ENCODE measurements at regions of chr17 and their contacts with region 1.

Region 1: GRCh38 chr17:44708401-44709181 is at the start of gene DBF4B:
- DNase-seq: peak; percentile 81
- H3K4me3 Mint-ChIP-seq: no peak within 1 kb of the TSS
- H3K27ac Mint-ChIP-seq: no peak within 1 kb of the TSS
- H3K4me1 Mint-ChIP-seq: peaks cover 5% of the 10 kb centered on the region
- H3K27me3 Mint-ChIP-seq: peaks cover 7% of the 10 kb centered on the region
- total RNA-seq, gene DBF4B: 22.5 and 22.8 TPM in 2 replicates

Region 2: GRCh38 chr17:44689477-44690217 is 18.9 kb before region 1 on chr17 and contains the start of gene CCDC43:
- intact Hi-C with region 1: loop called (anchors 1 kb)
- DNase-seq: peak; percentile 91
- H3K4me3 Mint-ChIP-seq: peak within 1 kb of the TSS; percentile 99
- H3K27ac Mint-ChIP-seq: peak within 1 kb of the TSS; percentile 89
- H3K4me1 Mint-ChIP-seq: peaks cover 32% of the 10 kb centered on the region
- H3K27me3 Mint-ChIP-seq: no peaks in the 10 kb centered on the region
- total RNA-seq, gene CCDC43: 42.6 and 44.6 TPM in 2 replicates

Region 3: GRCh38 chr17:44919885-44920564 is 211.4 kb after region 1 on chr17:
- intact Hi-C with region 1: no loop called
- DNase-seq: peak; percentile 50
- H3K4me3 Mint-ChIP-seq: no peak overlapping the region
- H3K27ac Mint-ChIP-seq: no peak overlapping the region
- H3K4me1 Mint-ChIP-seq: peaks cover 8% of the 10 kb centered on the region
- H3K27me3 Mint-ChIP-seq: peaks cover 25% of the 10 kb centered on the region